ENCODE measurements at regions of chr7 and their contacts with region 1.

Region 1: GRCh38 chr7:37234928-37235327 is 213.7 kb downstream of the ELMO1 start:
- DNase-seq: no peak
- H3K4me3 ChIP-seq: no peak overlapping the region
- H3K27ac ChIP-seq: no peak overlapping the region
- H3K4me1 ChIP-seq: no peaks in the 10 kb centered on the region
- H3K27me3 ChIP-seq: peaks cover 70% of the 10 kb centered on the region
- CTCF ChIP-seq: peak; percentile 40; the same call in 1 of the 2 replicates

Region 2: GRCh38 chr7:37193087-37193774 is 41.7 kb before region 1 on chr7:
- CTCF ChIA-PET with region 1: no interaction called
- POLR2A ChIA-PET with region 1: no interaction called
- intact Hi-C with region 1: no loop called
- DNase-seq: no peak
- H3K4me3 ChIP-seq: no peak overlapping the region
- H3K27ac ChIP-seq: no peak overlapping the region
- H3K4me1 ChIP-seq: no peaks in the 10 kb centered on the region
- H3K27me3 ChIP-seq: no peaks in the 10 kb centered on the region
- CTCF ChIP-seq: no peak

Region 3: DNA sequence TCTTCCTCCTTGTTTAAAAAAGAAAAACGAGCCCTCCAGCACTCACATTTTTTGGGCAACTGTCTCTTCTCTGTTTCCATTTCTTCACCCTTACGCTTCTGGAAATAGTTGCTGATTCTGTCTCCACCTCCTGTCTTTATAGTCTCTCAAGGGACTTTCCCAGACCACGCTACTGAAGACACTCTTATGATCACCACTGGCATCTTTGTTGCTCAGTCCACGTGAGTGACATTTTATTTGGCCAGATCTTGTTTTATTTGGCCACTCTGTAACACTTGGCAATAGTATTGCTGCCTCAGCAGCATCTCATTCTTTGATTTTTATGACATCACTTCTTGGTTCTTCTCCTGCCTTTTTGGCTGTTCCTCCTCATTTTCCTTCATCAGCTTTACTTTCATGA is 591.9 kb after region 1 on chr7:
- CTCF ChIA-PET with region 1: no interaction called
- POLR2A ChIA-PET with region 1: no interaction called
- intact Hi-C with region 1: loop called (anchors 5 kb)
- DNase-seq: no peak
- H3K4me3 ChIP-seq: no peak overlapping the region
- H3K27ac ChIP-seq: no peak overlapping the region
- H3K4me1 ChIP-seq: no peaks in the 10 kb centered on the region
- H3K27me3 ChIP-seq: peaks cover 6% of the 10 kb centered on the region
- CTCF ChIP-seq: no peak

Region 4: DNA sequence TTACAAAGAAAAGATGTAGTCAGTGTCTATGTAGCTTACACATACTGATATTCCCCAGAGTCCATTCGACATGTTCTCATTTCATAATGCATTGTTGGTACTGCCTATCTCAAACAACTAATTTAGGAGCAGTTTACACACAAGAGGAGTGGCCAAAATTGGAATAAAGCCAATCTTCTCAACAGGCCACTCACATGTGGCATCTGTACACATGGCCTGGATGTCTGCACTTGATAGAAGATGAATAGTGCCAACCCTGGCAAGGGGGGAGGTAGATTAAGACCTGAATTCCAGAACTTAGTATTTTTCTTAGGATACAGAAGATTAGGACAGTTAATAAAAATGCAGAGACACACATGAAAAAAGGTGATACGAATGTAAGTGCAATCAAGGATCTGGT is 817.9 kb after region 1 on chr7:
- CTCF ChIA-PET with region 1: no interaction called
- POLR2A ChIA-PET with region 1: no interaction called
- intact Hi-C with region 1: no loop called
- DNase-seq: no peak
- H3K4me3 ChIP-seq: no peak overlapping the region
- H3K27ac ChIP-seq: no peak overlapping the region
- H3K4me1 ChIP-seq: no peaks in the 10 kb centered on the region
- H3K27me3 ChIP-seq: no peaks in the 10 kb centered on the region
- CTCF ChIP-seq: no peak